ENCODE measurements at regions of chr1 and their contacts with region 1.

Region 1: GRCh38 chr1:226062558-226063223 is at the start of gene H3-3A:
- DNase-seq: peak; percentile 97 to 99 (median 98)
- ATAC-seq: peak; percentile 93
- H3K4me3 ChIP-seq: peak within 1 kb of the TSS; percentile 80
- H3K4me3 Mint-ChIP-seq: peak within 1 kb of the TSS; percentile 99 to 100 (median 100)
- H3K27ac ChIP-seq: peak within 1 kb of the TSS; percentile 97
- H3K27ac Mint-ChIP-seq: peak within 1 kb of the TSS; percentile 99 to 100 (median 100)
- H3K4me1 ChIP-seq: peaks cover 24 to 31% of the 10 kb centered on the region in 2 donors
- H3K4me1 Mint-ChIP-seq: peaks cover 34 to 63% (median 51%) of the 10 kb centered on the region in 7 donors
- H3K27me3 ChIP-seq: no peaks in the 10 kb centered on the region
- H3K27me3 Mint-ChIP-seq: no peaks in the 10 kb centered on the region
- total RNA-seq, gene H3-3A: 388 to 561 (median 412) TPM

Region 2: DNA sequence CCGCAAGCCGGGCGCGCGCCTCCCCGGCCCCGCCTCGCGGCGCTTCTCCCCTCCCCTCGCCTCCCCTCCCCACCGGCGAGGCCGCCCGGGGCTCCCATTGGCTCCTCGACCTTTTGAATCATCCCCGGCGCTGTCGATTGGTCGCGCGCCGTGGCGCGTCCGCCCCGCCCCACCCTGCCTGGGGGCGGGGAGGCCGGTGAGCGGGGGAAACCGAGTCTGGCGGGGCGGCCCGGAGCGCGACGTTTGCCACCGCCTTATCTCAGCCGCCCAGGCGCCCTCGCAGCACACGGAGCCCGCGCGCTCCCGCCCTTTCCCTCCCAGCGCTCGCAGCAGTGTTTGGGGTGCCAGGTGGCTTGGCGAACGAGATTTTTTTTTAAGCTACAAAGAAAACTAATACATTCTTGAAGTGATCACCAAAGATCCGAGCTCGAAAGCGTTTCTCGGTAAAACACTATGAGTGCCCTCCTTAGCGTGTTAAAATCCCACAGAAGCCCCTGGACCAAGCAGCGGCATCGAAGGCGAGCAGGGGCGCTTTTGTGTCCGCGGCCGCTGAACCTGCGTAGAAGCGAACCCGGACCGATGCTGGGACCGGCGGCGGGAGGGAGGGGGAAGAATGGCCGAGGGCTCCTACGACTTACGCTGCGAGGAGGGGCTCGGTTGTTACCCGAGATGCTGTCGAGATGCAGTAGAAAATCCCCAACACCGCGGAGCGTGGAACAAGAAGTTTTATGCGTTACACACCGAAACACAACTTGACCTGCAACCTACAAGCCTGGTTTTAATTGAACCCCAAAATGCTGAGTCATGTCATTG is 634.4 kb before region 1 on chr1:
- CTCF ChIA-PET with region 1: no interaction called
- POLR2A ChIA-PET with region 1: interaction called, 7 read pairs
- intact Hi-C with region 1: loop called (anchors 1 kb)
- DNase-seq: peak; percentile 81 to 94 (median 91)
- ATAC-seq: peak; percentile 95
- H3K4me3 ChIP-seq: peak overlapping the region; percentile 71
- H3K4me3 Mint-ChIP-seq: peak overlapping the region; percentile 88 to 99 (median 91)
- H3K27ac ChIP-seq: peak overlapping the region; percentile 78
- H3K27ac Mint-ChIP-seq: peak overlapping the region; percentile 71 to 97 (median 90)
- H3K4me1 ChIP-seq: peaks cover 31% of the 10 kb centered on the region in 2 donors
- H3K4me1 Mint-ChIP-seq: peaks cover 41 to 52% (median 46%) of the 10 kb centered on the region in 7 donors
- H3K27me3 ChIP-seq: no peaks in the 10 kb centered on the region
- H3K27me3 Mint-ChIP-seq: no peaks in the 10 kb centered on the region

Region 3: DNA sequence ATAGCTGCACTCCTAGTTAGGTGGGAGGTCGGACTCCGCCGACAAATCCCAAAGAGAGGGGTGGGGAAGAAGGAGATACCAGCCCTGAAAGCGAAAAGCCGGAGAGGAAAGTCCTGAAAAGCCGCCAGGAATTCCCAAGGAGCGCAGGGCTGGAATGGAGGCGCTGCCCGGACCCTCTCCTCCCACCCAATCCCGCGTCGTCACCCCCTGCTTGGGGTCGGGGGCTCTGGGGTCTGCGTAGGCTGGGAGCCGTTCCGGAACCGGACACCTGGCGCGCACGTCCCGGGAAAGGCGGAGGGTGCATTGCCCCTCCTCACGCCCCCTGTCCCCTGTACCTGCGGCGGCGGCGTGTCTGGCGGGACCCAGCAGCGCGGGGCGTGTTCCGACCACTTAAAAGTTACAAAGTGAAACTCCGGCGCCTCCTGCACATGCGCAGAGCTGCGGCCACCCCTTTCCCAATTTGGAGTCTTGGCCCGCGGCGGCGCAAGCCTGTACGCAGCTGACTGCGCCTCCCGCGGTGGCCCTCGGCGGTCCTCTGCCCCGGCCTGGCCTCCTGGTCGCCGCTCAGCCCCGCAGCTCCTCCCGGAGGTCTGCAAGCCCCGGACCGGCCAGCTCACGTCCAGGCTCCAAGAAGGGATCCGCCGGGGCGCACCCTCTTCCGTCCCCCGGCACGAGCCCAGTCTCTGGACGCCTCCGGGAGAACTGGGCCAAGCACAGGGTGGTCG is 180.6 kb before region 1 on chr1 and contains the start of gene TMEM63A:
- CTCF ChIA-PET with region 1: no interaction called
- POLR2A ChIA-PET with region 1: interaction called, 22 read pairs
- intact Hi-C with region 1: loop called in 1 of 2 experiments (anchors 5 kb)
- DNase-seq: peak; percentile 83 to 89 (median 87)
- ATAC-seq: peak; percentile 84
- H3K4me3 ChIP-seq: peak within 1 kb of the TSS; percentile 80
- H3K4me3 Mint-ChIP-seq: peak within 1 kb of the TSS; percentile 89 to 99 (median 97)
- H3K27ac ChIP-seq: peak within 1 kb of the TSS; percentile 90
- H3K27ac Mint-ChIP-seq: peak within 1 kb of the TSS; percentile 91 to 98 (median 96)
- H3K4me1 ChIP-seq: peaks cover 41% of the 10 kb centered on the region in 2 donors
- H3K4me1 Mint-ChIP-seq: peaks cover 37 to 50% (median 48%) of the 10 kb centered on the region in 7 donors
- H3K27me3 ChIP-seq: no peaks in the 10 kb centered on the region
- H3K27me3 Mint-ChIP-seq: peaks cover 0 to 21% (median 0%) of the 10 kb centered on the region in 5 donors
- total RNA-seq, gene TMEM63A: 189 to 611 (median 383) TPM

Region 4: GRCh38 chr1:226047495-226047894 is 15.2 kb before region 1 on chr1:
- CTCF ChIA-PET with region 1: no interaction called
- POLR2A ChIA-PET with region 1: interaction called, 19 read pairs
- intact Hi-C with region 1: no loop called
- DNase-seq: no peak
- ATAC-seq: no peak
- H3K4me3 ChIP-seq: no peak overlapping the region
- H3K4me3 Mint-ChIP-seq: no peak overlapping the region
- H3K27ac ChIP-seq: no peak overlapping the region
- H3K27ac Mint-ChIP-seq: no peak overlapping the region
- H3K4me1 ChIP-seq: no peaks in the 10 kb centered on the region
- H3K4me1 Mint-ChIP-seq: peaks cover 0 to 1% (median 0%) of the 10 kb centered on the region in 7 donors
- H3K27me3 ChIP-seq: no peaks in the 10 kb centered on the region
- H3K27me3 Mint-ChIP-seq: peaks cover 0 to 11% (median 0%) of the 10 kb centered on the region in 5 donors

Region 5: GRCh38 chr1:226121587-226122400 is 59.1 kb after region 1 on chr1:
- CTCF ChIA-PET with region 1: interaction called, 38 read pairs
- POLR2A ChIA-PET with region 1: interaction called, 20 read pairs
- intact Hi-C with region 1: loop called (anchors 1 kb)
- DNase-seq: peak; percentile 65 to 87 (median 77)
- ATAC-seq: peak; percentile 82
- H3K4me3 ChIP-seq: peak overlapping the region; percentile 28
- H3K4me3 Mint-ChIP-seq: peak overlapping the region; percentile 68 to 94 (median 82)
- H3K27ac ChIP-seq: peak overlapping the region; percentile 75
- H3K27ac Mint-ChIP-seq: peak overlapping the region in 4 of 9 donors; percentile 51 to 95 (median 77)
- H3K4me1 ChIP-seq: peaks cover 9 to 12% of the 10 kb centered on the region in 2 donors
- H3K4me1 Mint-ChIP-seq: peaks cover 15 to 40% (median 27%) of the 10 kb centered on the region in 7 donors
- H3K27me3 ChIP-seq: no peaks in the 10 kb centered on the region
- H3K27me3 Mint-ChIP-seq: peaks cover 0 to 10% (median 0%) of the 10 kb centered on the region in 5 donors

Region 6: DNA sequence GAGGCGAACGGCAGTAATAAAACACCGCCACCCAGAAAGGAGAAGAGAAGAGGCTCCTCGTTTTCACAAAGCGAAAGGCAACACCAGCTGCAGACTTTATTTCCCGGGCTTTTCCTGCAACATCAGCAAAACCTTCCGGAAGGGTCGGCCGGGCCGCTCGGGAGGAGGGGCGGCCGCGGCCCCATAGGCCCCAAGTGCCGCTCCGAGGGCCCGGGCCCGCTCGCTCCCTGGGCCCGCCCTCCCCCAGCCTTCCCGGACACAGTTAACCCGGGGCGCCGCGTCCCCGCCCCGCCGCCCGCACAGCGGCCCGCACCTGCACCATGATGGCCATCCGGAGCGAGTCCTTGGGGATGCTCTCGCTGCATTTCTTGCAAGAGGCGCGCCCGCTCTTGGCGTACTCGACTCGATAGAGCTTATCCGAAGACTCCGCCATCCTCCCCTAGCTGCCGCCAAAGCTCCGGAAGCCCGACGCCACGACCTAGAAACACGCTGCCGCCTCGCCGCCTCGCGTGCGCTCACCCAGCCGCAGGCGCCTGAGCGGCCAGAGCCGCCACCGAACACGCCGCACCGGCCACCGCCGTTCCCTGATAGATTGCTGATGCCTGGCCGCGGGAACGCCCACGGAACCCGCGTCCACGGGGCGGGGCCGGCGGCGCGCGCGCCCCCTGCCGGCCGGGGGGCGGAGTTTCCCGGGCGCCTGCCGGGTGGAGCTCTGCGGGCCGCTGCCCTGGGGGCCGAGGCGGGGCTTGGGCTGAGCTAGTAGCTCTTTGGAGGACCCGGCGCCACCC is 345.0 kb after region 1 on chr1 and contains the start of gene PARP1:
- CTCF ChIA-PET with region 1: no interaction called
- POLR2A ChIA-PET with region 1: interaction called, 3 read pairs
- intact Hi-C with region 1: loop called (anchors 2 to 5 kb)
- DNase-seq: peak; percentile 83 to 93 (median 89)
- ATAC-seq: peak; percentile 94
- H3K4me3 ChIP-seq: peak within 1 kb of the TSS; percentile 82
- H3K4me3 Mint-ChIP-seq: peak within 1 kb of the TSS; percentile 89 to 99 (median 94)
- H3K27ac ChIP-seq: peak within 1 kb of the TSS; percentile 74
- H3K27ac Mint-ChIP-seq: peak within 1 kb of the TSS; percentile 68 to 96 (median 93)
- H3K4me1 ChIP-seq: peaks cover 23 to 30% of the 10 kb centered on the region in 2 donors
- H3K4me1 Mint-ChIP-seq: peaks cover 37 to 46% (median 40%) of the 10 kb centered on the region in 7 donors
- H3K27me3 ChIP-seq: no peaks in the 10 kb centered on the region
- H3K27me3 Mint-ChIP-seq: peaks cover 0 to 3% (median 0%) of the 10 kb centered on the region in 5 donors
- total RNA-seq, gene PARP1: 63.6 to 165 (median 89.3) TPM